ENCODE measurements at regions of chr2 and their contacts with region 1.

Region 1: DNA sequence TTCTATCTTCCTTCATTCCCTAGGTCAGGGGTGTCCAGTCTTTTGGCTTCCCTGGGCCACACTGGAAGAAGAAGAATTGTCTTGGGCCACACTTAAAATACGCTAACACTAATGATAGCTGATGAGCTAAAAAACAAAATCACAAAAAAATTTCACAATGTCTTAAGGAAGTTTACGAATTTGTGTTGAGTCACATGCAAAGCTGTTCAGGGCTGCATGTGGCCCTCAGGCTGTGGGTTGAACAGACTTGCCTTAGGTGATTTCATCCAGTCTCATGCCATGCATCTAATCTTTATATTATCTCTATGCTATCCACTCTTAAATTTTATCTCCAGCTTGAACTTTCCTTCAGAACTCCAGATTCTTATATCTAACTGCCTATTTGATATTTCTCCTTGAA is 80.1 kb downstream of the CCDC85A start:
- DNase-seq: no peak
- ATAC-seq: no peak
- H3K4me3 ChIP-seq: no peak overlapping the region
- H3K27ac ChIP-seq: no peak overlapping the region
- H3K4me1 ChIP-seq: no peaks in the 10 kb centered on the region
- H3K27me3 ChIP-seq: no peaks in the 10 kb centered on the region
- CTCF ChIP-seq: no peak
- EP300 ChIP-seq: no peak
- POLR2A ChIP-seq: no peak
- RAD21 ChIP-seq: no peak

Region 2: GRCh38 chr2:56134861-56135260 is 129.0 kb before region 1 on chr2:
- CTCF ChIA-PET with region 1: no interaction called
- POLR2A ChIA-PET with region 1: no interaction called
- in situ Hi-C with region 1: no loop called
- intact Hi-C with region 1: no loop called
- DNase-seq: no peak
- ATAC-seq: peak; percentile 6; the same call in 2 of the 3 replicates
- H3K4me3 ChIP-seq: no peak overlapping the region
- H3K27ac ChIP-seq: peak overlapping the region; percentile 77
- H3K4me1 ChIP-seq: peaks cover 5 to 20% of the 10 kb centered on the region in 2 experiments; a peak in 4 of 5 replicates
- H3K27me3 ChIP-seq: no peaks in the 10 kb centered on the region
- CTCF ChIP-seq: no peak
- EP300 ChIP-seq: no peak
- POLR2A ChIP-seq: no peak
- RAD21 ChIP-seq: no peak

Region 3: GRCh38 chr2:56291711-56292110 is 27.8 kb after region 1 on chr2:
- CTCF ChIA-PET with region 1: no interaction called
- POLR2A ChIA-PET with region 1: no interaction called
- in situ Hi-C with region 1: no loop called
- intact Hi-C with region 1: loop called (anchors 2 kb)
- DNase-seq: no peak
- ATAC-seq: no peak
- H3K4me3 ChIP-seq: no peak overlapping the region
- H3K27ac ChIP-seq: no peak overlapping the region
- H3K4me1 ChIP-seq: no peaks in the 10 kb centered on the region
- H3K27me3 ChIP-seq: no peaks in the 10 kb centered on the region
- CTCF ChIP-seq: no peak
- EP300 ChIP-seq: no peak
- POLR2A ChIP-seq: no peak
- RAD21 ChIP-seq: no peak

Measured in K562 (cell line).